Body of pancreas (tissue), 4 donors: ENCODE measurements at regions of chr11 and their contacts with region 1.

Region 1: GRCh38 chr11:112280268-112281126 is 19.8 kb upstream of the PLET1 start:
- DNase-seq: peak; percentile 64 to 83 (median 74)
- ATAC-seq: peak; percentile 89
- H3K4me3 ChIP-seq: peak overlapping the region in 1 of 2 donors; percentile 22
- H3K27ac ChIP-seq: no peak overlapping the region
- H3K4me1 ChIP-seq: peaks cover 4% of the 10 kb centered on the region
- H3K27me3 ChIP-seq: no peaks in the 10 kb centered on the region
- CTCF ChIP-seq: peak; percentile 35 to 89 (median 70)
- POLR2A ChIP-seq: no peak

Region 2: DNA sequence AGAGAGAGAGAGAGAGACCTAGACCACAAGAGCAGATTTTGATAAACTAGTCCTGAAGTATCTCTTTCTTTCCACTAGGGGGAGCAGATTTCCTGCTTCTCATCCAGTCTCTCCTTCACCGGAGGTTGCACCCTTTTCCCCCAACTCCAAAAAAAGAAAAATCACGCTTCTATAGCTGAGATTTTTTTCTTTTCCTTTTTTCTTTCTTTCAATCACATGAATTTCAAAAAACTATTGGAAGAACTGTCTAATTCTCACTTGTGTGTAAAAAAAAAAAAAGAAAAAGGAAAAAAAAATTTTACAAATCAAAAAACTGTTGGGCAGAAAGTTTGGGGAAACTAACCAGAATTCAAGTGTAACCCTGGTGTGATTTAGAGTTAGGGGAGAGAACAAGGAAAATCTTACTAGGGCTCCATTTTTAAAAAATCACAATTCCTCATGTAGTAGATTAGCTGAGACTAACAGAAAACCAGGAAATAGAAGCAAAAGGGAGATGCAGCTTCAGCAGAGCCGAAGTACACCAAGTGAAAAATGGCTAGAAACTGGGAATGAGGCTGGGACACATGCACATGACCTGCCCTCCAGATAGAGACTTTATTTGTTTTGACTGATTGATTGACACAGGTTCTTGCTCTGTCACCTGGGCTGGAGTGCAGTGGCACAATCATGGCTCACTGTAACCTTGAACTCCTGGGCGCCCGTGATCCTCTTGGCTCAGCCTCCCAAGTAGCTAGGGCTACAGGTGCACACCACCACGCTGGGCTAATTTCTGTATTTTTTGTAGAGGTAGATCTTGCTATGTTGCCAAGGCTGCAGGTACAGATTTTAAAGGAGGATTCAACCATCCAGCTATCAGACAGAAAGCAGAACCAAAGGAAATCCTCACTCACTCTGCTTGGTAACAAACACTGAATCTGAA is 166.7 kb before region 1 on chr11:
- intact Hi-C with region 1: loop called (anchors 10 kb)
- DNase-seq: no peak
- ATAC-seq: peak; percentile 72
- H3K4me3 ChIP-seq: no peak overlapping the region
- H3K27ac ChIP-seq: no peak overlapping the region
- H3K4me1 ChIP-seq: peaks cover 4% of the 10 kb centered on the region
- H3K27me3 ChIP-seq: no peaks in the 10 kb centered on the region
- CTCF ChIP-seq: peak; percentile 29 to 73 (median 63)
- POLR2A ChIP-seq: no peak

Region 3: DNA sequence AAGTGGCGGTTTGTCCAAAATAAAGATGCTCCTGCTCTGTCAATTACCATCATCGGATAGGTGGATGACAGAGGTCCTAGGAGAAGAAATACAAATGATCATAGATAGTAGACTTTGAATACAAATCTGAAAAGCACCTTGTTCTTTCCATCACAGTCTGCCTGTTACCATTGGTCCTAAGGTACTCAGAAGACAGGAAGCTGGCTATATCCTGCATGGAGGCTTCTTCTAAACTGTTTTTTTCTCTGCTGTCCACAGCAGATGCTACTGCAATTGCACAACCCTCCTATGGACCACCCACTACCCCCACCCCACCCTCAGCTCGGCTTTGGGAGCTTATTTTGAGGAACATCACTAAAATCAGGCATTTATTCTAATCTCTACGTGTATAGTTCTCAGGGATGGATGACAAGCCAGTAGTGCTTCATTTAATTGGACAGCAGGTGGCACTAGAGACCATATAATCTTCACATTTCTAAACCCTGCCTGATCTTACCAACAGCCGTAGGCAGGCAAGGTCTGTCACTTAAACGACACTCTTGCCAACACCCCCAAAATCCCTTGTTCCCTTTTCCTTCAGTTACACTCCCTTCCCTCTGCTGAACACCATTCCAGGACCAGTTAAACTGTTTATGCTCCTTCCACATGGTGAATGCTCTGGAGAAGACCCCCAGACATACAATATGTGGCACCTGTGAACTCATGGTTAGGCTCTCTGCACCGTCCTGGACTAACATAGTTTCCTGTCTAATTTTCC is 60.8 kb before region 1 on chr11:
- intact Hi-C with region 1: loop called (anchors 5 kb)
- DNase-seq: peak; percentile 39 to 67 (median 54)
- ATAC-seq: peak; percentile 94
- H3K4me3 ChIP-seq: no peak overlapping the region
- H3K27ac ChIP-seq: no peak overlapping the region
- H3K4me1 ChIP-seq: no peaks in the 10 kb centered on the region
- H3K27me3 ChIP-seq: no peaks in the 10 kb centered on the region
- CTCF ChIP-seq: peak; percentile 65 to 93 (median 91)
- POLR2A ChIP-seq: no peak